Activated CD8-positive, alpha-beta T cell treated with anti-CD3 and anti-CD28 coated beads, Interleukin-2, amount 10 ng/mL, durations not matched to agents 7 days and 5 days (primary cell): ENCODE measurements at regions of chr13 and their contacts with region 1.

Region 1: DNA sequence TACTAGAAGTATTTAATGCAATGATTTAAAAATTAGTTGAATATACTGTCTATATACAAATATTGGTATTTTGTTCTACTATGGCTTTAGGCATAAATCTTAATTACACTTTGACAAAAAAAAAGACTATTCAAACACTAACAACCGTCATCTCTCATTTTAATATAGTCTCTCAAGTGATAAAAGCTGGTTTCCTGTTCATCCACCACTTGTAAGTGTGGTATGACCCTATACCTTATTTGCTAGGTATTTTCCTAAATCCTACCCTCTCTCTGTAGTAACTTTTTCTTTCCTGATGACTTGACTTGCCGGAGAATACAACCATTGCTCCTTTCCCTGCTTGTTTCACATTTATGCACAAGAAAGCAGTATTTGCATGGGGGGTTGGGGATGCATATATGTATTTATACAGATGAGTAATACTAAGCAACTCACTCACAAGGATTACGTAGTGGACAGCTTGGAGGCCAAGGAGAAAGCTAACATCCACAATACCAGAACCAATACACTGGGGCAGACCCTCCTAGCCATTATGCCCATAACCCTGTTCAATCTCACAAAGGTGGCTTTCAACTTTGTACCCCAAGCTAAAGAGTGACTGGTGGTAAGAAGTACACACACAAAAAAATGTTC is 12.7 kb upstream of the EFNB2 start:
- DNase-seq: no peak
- ATAC-seq: no peak
- H3K4me3 Mint-ChIP-seq: no peak overlapping the region
- H3K27ac Mint-ChIP-seq: no peak overlapping the region
- H3K4me1 Mint-ChIP-seq: peaks cover 11% of the 10 kb centered on the region
- H3K27me3 Mint-ChIP-seq: no peaks in the 10 kb centered on the region

Region 2: GRCh38 chr13:106536244-106537034 is 11.7 kb before region 1 on chr13:
- CTCF ChIA-PET with region 1: interaction called, 15 read pairs
- POLR2A ChIA-PET with region 1: no interaction called
- DNase-seq: peak; percentile 89
- ATAC-seq: peak; percentile 41
- H3K4me3 Mint-ChIP-seq: peak overlapping the region; percentile 85
- H3K27ac Mint-ChIP-seq: peak overlapping the region; percentile 62
- H3K4me1 Mint-ChIP-seq: peaks cover 18% of the 10 kb centered on the region
- H3K27me3 Mint-ChIP-seq: peaks cover 24% of the 10 kb centered on the region

Region 3: DNA sequence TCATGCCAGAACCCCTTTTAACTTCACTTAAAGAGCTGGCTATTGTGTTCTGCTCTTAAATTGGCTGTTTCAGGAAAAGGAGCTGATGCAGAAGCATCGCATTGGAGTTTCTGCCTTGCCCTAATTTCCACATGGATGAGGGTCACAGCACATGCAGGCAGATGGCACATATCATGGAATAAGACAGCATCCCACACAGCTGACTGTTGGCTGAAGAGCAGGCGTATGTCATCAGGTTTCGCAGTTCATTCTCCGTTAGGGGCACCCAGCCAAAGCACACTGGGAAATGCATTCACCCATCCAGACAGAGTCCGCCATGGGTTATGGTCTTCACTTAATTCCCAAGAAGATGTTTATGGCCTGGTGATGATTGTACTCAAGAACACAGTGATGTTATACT is 1094.7 kb after region 1 on chr13:
- CTCF ChIA-PET with region 1: no interaction called
- POLR2A ChIA-PET with region 1: no interaction called
- DNase-seq: no peak
- ATAC-seq: no peak
- H3K4me3 Mint-ChIP-seq: no peak overlapping the region
- H3K27ac Mint-ChIP-seq: no peak overlapping the region
- H3K4me1 Mint-ChIP-seq: no peaks in the 10 kb centered on the region
- H3K27me3 Mint-ChIP-seq: no peaks in the 10 kb centered on the region